Activated T-helper 1 cell treated with anti-CD3 and anti-CD28 coated beads, Interleukin-12 subunit alpha, Interleukin-12 subunit beta, Interleukin-2, Interleukin-4 antibody, amounts not matched to agents 30 ng/mL and 10 ng/mL and 1 ng/mL, durations not matched to agents 14 hours and 24 hours and 36 hours (primary cell): ENCODE measurements at regions of chr4 and their contacts with region 1.

Region 1: DNA sequence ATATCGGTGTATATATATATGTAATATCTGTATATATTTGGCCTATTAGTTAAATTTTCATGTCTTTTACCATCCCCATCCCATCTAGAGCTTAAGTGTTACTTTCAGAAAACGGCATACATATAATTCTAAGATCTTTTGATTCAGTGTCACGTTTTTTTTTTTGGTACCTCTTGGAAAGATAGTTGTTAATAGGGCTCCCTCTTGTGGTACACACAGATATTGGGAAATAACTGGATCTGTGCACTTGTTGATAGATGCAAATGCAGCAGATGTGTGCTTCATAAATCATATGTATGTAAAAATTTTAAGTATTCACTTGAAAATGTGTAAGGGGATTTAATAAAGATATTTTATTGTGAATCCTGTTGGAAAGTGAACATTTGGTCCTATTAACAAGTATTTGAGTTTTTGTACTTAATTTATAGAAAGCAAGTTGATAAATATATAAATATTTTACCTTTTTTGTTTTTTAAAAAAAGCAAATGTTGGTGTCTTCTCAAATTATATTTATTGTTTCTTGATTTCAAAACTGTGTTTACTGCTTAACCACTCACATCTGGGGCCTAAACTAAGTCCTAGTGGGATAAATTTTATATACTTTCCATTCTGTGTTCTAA is 74.7 kb downstream of the PAQR3 start:
- DNase-seq: peak; percentile 12
- H3K4me3 Mint-ChIP-seq: no peak overlapping the region
- H3K27ac Mint-ChIP-seq: no peak overlapping the region
- H3K4me1 Mint-ChIP-seq: peaks cover 15% of the 10 kb centered on the region
- H3K27me3 Mint-ChIP-seq: no peaks in the 10 kb centered on the region

Region 2: DNA sequence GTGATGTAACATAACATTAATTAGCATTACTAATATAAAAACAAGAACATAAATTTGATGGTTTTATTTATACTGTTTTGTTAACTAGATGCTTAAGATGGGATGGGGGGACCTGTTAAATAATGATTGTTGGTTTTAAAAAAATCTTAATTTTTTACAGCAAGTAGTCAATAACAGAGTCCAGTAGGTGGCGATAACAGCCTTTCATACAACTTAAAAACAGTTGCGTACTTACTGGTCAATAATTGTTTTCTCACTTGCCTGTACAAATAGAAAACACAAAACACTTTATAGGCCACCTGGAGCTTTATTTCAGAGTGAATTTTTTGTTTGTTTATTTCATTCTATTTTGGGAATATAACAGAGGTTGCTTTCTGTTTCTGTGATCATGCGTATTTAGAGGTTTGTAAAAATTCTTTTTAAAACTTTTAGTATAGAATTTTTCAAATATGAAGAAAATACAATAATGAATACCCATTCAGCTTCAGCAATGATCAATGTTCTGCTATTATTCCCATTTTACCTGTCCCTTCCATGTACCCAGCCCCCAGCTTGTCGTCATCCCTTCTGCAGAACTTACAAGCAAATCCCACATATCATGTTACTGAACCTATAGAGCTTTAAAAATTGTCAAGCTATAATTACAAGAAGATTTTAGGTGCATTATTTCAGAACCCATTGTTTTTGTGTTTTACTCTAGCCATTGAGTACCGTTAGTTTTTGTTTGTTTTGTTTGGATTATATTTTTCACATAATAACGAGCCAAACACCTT is 904.8 kb before region 1 on chr4:
- intact Hi-C with region 1: loop called (anchors 1 kb)
- DNase-seq: no peak
- H3K4me3 Mint-ChIP-seq: no peak overlapping the region
- H3K27ac Mint-ChIP-seq: no peak overlapping the region
- H3K4me1 Mint-ChIP-seq: no peaks in the 10 kb centered on the region
- H3K27me3 Mint-ChIP-seq: peaks cover under 1% of the 10 kb centered on the region

Region 3: GRCh38 chr4:78320349-78320935 is 544.1 kb before region 1 on chr4:
- intact Hi-C with region 1: loop called (anchors 10 kb)
- DNase-seq: no peak
- H3K4me3 Mint-ChIP-seq: no peak overlapping the region
- H3K27ac Mint-ChIP-seq: no peak overlapping the region
- H3K4me1 Mint-ChIP-seq: peaks cover 9% of the 10 kb centered on the region
- H3K27me3 Mint-ChIP-seq: peaks cover 15% of the 10 kb centered on the region

Region 4: DNA sequence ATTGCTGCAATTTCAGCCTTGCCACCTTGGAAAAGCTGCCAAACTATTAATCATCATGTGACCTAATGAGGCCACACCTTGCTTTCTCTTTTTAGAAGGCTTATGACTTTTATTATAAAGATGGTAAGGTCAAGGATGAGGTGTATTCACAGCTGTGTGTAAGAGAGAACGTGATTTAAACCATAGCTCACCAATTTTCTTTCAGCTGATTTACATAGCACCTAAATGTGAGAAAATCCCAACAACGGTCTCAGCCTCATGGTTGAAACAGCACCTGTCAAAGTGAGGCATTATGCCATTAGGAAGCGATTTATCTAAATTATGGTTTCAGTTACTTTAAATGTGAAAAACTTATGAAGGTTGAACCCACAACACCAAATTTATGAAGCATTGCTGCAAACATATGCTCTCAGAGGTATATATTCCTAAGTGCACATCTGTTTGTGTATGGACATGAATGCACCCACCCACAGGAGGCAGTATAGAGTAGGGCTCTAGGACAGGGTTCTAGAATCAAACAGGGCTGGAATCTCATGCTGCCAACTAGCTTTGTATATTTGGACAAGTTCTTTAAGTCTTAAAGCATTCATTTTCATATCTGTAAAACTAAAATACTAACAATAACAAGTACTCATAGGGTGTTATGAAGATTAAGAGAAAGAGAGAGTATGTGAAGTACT is 272.3 kb before region 1 on chr4:
- intact Hi-C with region 1: loop called (anchors 1 kb)
- DNase-seq: no peak
- H3K4me3 Mint-ChIP-seq: no peak overlapping the region
- H3K27ac Mint-ChIP-seq: no peak overlapping the region
- H3K4me1 Mint-ChIP-seq: no peaks in the 10 kb centered on the region
- H3K27me3 Mint-ChIP-seq: no peaks in the 10 kb centered on the region